Activated CD4-positive, alpha-beta T cell treated with anti-CD3 and anti-CD28 coated beads, Interleukin-2, amount 10 ng/mL, durations not matched to agents 24 days and 14 days (primary cell): ENCODE measurements at regions of chr19 and their contacts with region 1.

Region 1: DNA sequence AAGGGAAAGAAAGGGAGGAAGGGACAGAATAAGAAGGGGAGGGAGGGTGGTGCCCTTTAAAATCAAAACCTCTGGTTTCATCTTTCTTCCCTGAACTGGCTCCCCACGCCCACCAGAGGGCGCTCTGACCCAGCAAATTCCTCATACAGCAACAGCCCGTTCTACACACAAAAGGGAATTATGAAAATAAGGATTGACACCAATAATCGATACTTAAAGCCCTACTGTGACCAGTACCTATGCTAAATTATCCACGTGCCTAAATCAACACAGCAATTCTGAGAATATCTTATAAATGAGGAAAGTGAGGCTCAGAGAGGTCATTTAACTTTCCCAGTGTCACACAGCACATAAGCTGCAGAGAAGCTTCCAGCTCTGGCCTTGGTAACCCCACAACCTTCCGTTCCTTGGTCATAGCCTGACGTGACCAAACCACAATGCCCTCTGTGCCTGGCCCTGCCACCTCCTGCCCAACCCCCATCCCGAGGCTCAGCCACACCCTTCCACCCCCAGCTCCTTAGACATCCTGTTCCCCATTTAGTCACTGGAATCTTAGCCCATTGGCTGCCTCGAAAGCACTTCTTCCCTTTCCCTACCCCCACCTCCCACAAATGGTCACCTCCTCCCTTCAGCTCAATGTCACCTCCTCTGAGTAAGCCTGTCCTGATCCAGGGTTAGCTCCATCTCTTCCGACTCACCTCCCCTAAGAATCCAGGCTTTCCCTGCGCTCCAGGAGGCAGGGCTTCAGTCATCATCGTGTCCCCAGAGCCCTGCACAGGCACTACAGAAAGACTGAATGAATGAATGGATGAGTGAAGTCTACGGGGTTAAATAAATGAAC is 34.2 kb upstream of the PNMA8B start:
- DNase-seq: peak; percentile 92
- H3K4me3 Mint-ChIP-seq: peak overlapping the region; percentile 8
- H3K27ac Mint-ChIP-seq: peak overlapping the region; percentile 39
- H3K4me1 Mint-ChIP-seq: peaks cover 23% of the 10 kb centered on the region
- H3K27me3 Mint-ChIP-seq: no peaks in the 10 kb centered on the region

Region 2: GRCh38 chr19:46542428-46543230 is 12.8 kb after region 1 on chr19:
- intact Hi-C with region 1: loop called (anchors 1 kb)
- DNase-seq: peak; percentile 92
- H3K4me3 Mint-ChIP-seq: no peak overlapping the region
- H3K27ac Mint-ChIP-seq: no peak overlapping the region
- H3K4me1 Mint-ChIP-seq: peaks cover 6% of the 10 kb centered on the region
- H3K27me3 Mint-ChIP-seq: peaks cover 9% of the 10 kb centered on the region

Region 3: GRCh38 chr19:46600384-46601317 is 70.8 kb after region 1 on chr19:
- intact Hi-C with region 1: loop called (anchors 5 kb)
- DNase-seq: peak; percentile 99
- H3K4me3 Mint-ChIP-seq: peak overlapping the region; percentile 97
- H3K27ac Mint-ChIP-seq: peak overlapping the region; percentile 100
- H3K4me1 Mint-ChIP-seq: peaks cover 18% of the 10 kb centered on the region
- H3K27me3 Mint-ChIP-seq: no peaks in the 10 kb centered on the region